Activated CD8-positive, alpha-beta T cell treated with anti-CD3 and anti-CD28 coated beads, Interleukin-2, amount 10 ng/mL, durations not matched to agents 7 days and 5 days (primary cell): ENCODE measurements at regions of chr10 and their contacts with region 1.

Region 1: DNA sequence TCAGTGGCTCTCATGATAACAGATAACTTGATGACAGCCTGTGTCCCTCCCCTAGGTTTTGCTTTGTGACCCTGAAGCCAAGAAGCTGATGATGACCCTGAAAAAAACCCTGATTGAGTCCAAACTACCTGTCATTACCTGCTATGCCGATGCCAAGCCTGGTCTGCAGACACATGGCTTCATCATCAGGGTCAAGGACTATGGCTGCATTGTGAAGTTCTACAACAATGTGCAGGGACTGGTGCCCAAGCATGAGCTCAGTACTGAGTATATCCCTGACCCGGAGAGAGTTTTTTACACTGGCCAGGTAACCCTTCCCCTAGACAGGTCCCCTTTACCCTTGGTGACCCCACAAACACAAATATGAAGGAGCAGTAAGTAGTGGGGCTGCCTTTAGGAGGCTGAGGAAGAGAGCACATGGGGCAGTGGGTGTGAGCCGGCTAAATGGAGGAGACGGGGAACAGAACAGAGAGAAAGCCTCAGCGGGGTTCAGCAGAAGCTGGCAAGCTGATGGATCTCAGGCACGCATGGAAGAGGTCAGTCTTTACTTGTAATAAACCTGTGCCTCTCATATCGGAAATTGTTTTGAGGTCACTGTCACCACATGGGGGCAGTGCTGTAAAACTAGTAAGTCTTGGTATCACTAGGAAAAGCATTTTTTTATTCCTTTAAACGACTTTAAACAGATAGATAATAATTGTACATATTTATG is 20.2 kb downstream of the PDCD11 start:
- DNase-seq: peak; percentile 84
- ATAC-seq: peak; percentile 76
- H3K4me3 Mint-ChIP-seq: no peak overlapping the region
- H3K27ac Mint-ChIP-seq: peak overlapping the region; percentile 27
- H3K4me1 Mint-ChIP-seq: peaks cover 11% of the 10 kb centered on the region
- H3K27me3 Mint-ChIP-seq: no peaks in the 10 kb centered on the region

Region 2: DNA sequence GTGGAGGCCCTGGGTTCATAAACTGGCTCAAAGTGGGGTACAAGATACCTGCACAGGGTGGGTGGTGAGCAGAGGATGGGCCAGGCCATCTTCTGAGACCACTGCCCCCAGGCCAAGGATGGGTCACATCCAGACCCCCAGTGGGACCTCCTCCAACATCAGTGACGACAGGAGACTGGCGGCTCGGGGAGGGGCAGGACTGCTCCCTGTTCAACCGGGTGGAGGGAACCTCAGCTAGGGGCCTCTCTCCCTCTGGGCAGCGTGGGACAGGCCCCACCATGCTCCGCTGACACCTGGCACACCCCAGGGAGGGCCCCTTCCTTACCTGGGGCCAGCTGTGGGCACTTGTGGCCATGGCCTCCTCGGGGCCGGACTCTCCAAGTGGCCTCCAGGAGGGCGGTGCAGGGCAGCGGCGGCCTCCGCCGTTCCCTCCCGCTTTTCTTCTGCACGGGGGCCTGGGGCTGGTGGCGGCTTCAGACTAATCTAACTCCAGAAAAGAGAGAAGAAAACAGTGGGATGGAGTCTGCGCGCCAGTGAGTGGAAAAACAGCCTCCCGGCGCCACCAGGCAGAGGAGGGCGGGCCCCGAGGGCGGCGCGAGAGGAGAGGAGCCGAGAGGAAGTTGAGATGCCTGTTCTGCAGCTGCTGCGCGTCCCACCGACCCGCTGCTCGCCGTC is 35.4 kb after region 1 on chr10 and contains the start of gene CALHM2:
- CTCF ChIA-PET with region 1: interaction called, 27 read pairs
- POLR2A ChIA-PET with region 1: no interaction called
- DNase-seq: peak; percentile 74
- ATAC-seq: peak; percentile 78
- H3K4me3 Mint-ChIP-seq: peak within 1 kb of the TSS; percentile 98
- H3K27ac Mint-ChIP-seq: peak within 1 kb of the TSS; percentile 92
- H3K4me1 Mint-ChIP-seq: peaks cover 71% of the 10 kb centered on the region
- H3K27me3 Mint-ChIP-seq: no peaks in the 10 kb centered on the region
- total RNA-seq, gene CALHM2: 131 to 135 TPM

Region 3: GRCh38 chr10:103470761-103471653 is 54.4 kb after region 1 on chr10:
- CTCF ChIA-PET with region 1: interaction called, 51 read pairs
- POLR2A ChIA-PET with region 1: no interaction called
- DNase-seq: peak; percentile 96
- ATAC-seq: peak; percentile 84
- H3K4me3 Mint-ChIP-seq: peak overlapping the region; percentile 74
- H3K27ac Mint-ChIP-seq: peak overlapping the region; percentile 95
- H3K4me1 Mint-ChIP-seq: peaks cover 84% of the 10 kb centered on the region
- H3K27me3 Mint-ChIP-seq: no peaks in the 10 kb centered on the region

Region 4: DNA sequence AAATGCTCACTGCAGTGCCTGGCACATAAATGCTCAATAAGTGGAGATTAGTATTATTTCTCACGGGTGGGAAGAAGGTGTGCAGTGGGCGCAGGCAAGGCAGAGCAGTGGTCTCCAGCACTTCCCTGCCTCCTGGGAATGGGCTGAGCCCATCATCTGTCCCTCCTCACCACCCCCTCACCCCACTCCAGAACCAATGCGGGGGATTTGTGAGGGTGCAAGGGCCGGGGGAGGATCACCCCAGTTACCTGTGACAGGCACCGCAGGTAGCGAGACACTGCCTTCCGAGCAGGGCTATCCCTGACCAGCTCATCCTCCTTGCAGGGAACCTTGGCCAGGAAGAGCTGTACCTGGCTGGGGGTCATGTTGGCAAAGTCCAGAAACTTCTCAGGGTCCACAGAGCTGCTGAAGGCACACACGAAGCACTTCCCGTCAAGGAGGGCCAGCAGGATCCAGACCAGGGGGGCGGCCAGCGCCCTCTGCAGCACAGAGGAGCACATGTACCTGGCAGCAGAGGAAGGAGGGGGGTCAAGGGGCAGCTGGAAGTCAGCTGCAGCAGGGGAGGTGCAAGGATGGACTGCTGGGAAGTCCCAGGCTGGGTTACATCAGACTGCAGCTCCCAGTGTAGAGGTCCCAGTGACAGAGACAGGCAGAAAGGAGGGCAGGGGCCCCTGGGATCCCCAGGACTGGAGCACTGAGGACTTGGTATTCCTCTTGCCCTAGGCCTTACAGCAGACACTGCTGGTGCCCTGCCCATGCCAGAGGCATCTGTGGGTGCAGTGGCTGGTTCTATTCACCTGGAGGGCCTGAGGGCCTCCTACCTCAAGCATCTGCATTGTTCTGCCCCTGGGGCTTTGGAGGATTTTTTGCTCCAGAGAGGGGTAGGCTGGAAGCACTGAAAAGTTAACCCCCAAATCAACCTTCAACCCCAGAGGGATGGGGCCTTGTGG is 59.7 kb after region 1 on chr10:
- CTCF ChIA-PET with region 1: interaction called, 51 read pairs
- POLR2A ChIA-PET with region 1: no interaction called
- DNase-seq: peak; percentile 54
- ATAC-seq: peak; percentile 34
- H3K4me3 Mint-ChIP-seq: no peak overlapping the region
- H3K27ac Mint-ChIP-seq: peak overlapping the region; percentile 74
- H3K4me1 Mint-ChIP-seq: peaks cover 70% of the 10 kb centered on the region
- H3K27me3 Mint-ChIP-seq: no peaks in the 10 kb centered on the region

Region 5: GRCh38 chr10:103491493-103492381 is 75.1 kb after region 1 on chr10:
- CTCF ChIA-PET with region 1: interaction called, 148 read pairs
- POLR2A ChIA-PET with region 1: no interaction called
- DNase-seq: no peak
- ATAC-seq: no peak
- H3K4me3 Mint-ChIP-seq: no peak overlapping the region
- H3K27ac Mint-ChIP-seq: no peak overlapping the region
- H3K4me1 Mint-ChIP-seq: peaks cover 29% of the 10 kb centered on the region
- H3K27me3 Mint-ChIP-seq: peaks cover 43% of the 10 kb centered on the region

Region 6: GRCh38 chr10:103535630-103536029 is 119.0 kb after region 1 on chr10:
- CTCF ChIA-PET with region 1: no interaction called
- POLR2A ChIA-PET with region 1: no interaction called
- DNase-seq: no peak
- ATAC-seq: no peak
- H3K4me3 Mint-ChIP-seq: no peak overlapping the region
- H3K27ac Mint-ChIP-seq: no peak overlapping the region
- H3K4me1 Mint-ChIP-seq: no peaks in the 10 kb centered on the region
- H3K27me3 Mint-ChIP-seq: peaks cover 12% of the 10 kb centered on the region